Activated CD4-positive, alpha-beta T cell treated with anti-CD3 and anti-CD28 coated beads, Interleukin-2, amount 10 ng/mL, durations not matched to agents 7 days and 5 days (primary cell): ENCODE measurements at regions of chr10 and their contacts with region 1.

Region 1: DNA sequence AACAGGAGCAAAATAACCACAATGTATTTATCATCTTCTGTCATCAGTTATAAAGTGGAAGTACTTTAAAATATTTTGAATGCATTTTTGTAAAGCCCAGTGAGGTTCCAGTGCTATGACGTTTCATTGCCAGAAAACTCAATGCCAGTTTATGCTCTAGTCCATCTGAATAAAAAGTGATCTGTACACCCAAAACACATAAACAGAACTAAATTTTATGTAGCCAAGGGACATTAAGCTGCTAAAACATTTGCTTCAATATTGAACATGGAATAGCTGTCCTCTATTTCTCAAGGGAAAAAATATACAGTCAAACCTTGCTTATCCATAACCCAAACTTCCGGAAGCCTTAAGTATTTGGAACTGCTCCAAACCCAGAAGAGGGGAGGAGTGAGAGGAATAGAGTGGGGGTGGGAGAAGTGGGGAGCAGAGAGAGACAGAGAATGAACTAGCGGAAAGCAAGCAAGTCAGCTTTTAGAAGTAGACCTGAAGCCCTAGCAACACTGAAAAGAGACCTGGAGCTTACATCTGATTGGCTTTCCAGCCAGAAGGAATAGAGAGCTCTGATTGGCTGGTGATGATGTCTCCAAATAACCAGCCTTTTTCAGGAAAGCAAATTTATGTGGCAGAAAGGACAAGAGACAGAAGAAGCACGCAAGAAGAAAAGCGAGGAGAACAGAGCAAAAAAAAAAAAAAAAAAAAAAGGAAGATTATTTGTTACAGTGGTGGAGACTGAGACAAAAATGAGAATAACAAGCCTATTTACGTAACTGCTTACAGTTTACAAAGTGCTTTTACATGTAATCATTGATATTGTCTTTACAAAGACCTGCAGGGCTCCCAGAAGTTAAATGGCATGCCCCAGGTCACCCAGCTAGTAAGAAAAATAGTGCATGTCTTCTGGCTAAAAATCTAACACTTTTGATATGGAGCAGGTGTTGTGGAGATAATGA is 196.0 kb downstream of the RNLS start:
- DNase-seq: no peak
- H3K4me3 Mint-ChIP-seq: no peak overlapping the region
- H3K27ac Mint-ChIP-seq: no peak overlapping the region
- H3K4me1 Mint-ChIP-seq: peaks cover 35% of the 10 kb centered on the region
- H3K27me3 Mint-ChIP-seq: no peaks in the 10 kb centered on the region

Region 2: DNA sequence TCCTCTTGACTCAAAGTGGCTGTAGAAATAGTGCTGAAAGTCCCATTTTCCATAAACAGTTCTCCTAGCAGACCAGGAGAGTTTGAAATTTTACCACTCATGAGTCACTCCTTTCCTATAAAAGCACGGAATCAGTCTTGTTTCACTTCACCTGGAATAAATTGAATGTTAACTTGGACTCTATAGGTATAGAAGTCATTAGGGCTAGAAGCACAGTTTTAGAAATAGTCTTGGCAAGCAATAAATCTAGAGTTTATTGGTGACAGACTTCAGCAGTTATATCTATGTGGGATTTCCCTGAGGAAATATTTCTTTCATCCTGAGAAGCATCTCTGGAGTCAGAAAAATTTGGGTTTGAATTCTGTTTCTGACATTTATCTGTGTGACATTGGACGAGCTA is 16.4 kb before region 1 on chr10:
- CTCF ChIA-PET with region 1: interaction called, 14 read pairs
- POLR2A ChIA-PET with region 1: no interaction called
- DNase-seq: no peak
- H3K4me3 Mint-ChIP-seq: no peak overlapping the region
- H3K27ac Mint-ChIP-seq: no peak overlapping the region
- H3K4me1 Mint-ChIP-seq: peaks cover 10% of the 10 kb centered on the region
- H3K27me3 Mint-ChIP-seq: no peaks in the 10 kb centered on the region